PC-9 (cell line): ENCODE measurements at regions of chr5 and their contacts with region 1.

Region 1: GRCh38 chr5:33776151-33776660 is 115.6 kb downstream of the ADAMTS12 start:
- DNase-seq: no peak
- H3K4me3 ChIP-seq: no peak overlapping the region
- H3K27ac ChIP-seq: no peak overlapping the region
- H3K4me1 ChIP-seq: peaks cover 14% of the 10 kb centered on the region
- H3K27me3 ChIP-seq: no peaks in the 10 kb centered on the region
- CTCF ChIP-seq: no peak

Region 2: GRCh38 chr5:33800241-33800950 is 24.2 kb after region 1 on chr5:
- CTCF ChIA-PET with region 1: no interaction called
- POLR2A ChIA-PET with region 1: no interaction called
- intact Hi-C with region 1: no loop called
- DNase-seq: no peak
- H3K4me3 ChIP-seq: no peak overlapping the region
- H3K27ac ChIP-seq: no peak overlapping the region
- H3K4me1 ChIP-seq: no peaks in the 10 kb centered on the region
- H3K27me3 ChIP-seq: no peaks in the 10 kb centered on the region
- CTCF ChIP-seq: no peak

Region 3: DNA sequence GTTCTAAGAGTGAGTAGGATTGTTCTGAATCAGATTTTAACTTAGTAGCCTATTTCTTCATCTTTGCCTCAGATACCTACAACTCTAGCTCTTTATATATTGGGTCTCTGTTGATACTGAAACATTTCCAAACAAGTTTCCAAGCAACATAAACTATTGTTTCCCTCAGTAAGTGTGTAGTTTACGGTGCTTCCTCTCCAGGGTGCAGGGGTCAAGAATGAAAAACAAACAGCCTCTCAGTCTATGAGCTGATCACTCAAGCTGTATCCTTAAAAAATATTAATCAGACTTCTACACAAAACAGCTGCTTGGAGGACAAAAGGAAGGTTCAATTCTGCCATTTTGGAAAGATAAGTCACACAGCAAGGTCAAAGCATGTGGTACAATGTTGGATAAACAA is 40.6 kb after region 1 on chr5:
- CTCF ChIA-PET with region 1: no interaction called
- POLR2A ChIA-PET with region 1: interaction called, 11 read pairs
- intact Hi-C with region 1: no loop called
- DNase-seq: no peak
- H3K4me3 ChIP-seq: no peak overlapping the region
- H3K27ac ChIP-seq: peak overlapping the region; percentile 67
- H3K4me1 ChIP-seq: peaks cover 25% of the 10 kb centered on the region
- H3K27me3 ChIP-seq: no peaks in the 10 kb centered on the region
- CTCF ChIP-seq: no peak